PC-9 (cell line): ENCODE measurements at regions of chr6 and their contacts with region 1.

Region 1: DNA sequence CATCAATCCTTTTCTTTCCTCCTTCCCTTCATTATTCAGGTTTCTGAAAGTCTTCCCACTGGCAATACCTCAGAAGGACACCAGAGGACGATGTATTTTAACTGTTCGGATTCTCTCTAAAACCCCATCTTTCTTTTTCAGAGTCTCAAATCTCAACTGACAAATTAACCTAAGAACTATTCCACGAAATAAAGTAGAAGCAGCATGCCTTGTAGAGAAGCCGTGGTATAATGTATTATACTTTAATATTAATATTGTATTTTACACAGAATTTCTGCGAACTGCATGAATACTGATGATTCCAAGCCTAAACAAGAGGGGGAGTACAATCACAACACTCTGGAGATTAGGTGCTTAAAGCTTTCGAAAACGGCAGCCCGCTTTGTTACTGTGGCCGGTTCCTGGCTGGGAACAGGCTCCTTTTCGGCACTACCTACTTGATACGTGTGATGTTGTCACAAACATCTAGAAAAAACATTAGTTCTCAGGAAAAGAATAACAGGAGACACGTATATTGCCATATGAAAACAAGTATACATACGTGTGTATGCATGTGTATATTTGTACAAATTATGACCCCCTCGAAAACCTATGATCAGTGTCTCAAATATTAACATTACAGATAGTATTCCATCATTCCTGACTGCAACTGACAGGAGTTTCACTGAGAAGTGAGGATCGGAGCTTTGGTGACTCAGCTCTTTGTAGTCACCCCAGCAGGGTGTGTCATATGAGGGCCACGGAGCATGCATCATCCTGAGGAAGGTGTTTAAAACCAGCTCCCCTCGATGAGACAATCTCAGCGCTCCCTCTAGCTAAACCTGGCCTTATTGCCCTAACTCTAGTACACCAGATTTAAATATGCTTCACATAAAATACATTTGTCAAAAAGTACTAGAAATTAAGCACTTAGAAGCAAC is 319.7 kb upstream of the TCF21 start:
- DNase-seq: peak; percentile 68 to 88
- H3K4me3 ChIP-seq: peak overlapping the region; percentile 57
- H3K27ac ChIP-seq: peak overlapping the region; percentile 92
- H3K4me1 ChIP-seq: peaks cover 12% of the 10 kb centered on the region
- H3K27me3 ChIP-seq: no peaks in the 10 kb centered on the region
- CTCF ChIP-seq: peak; percentile 99

Region 2: DNA sequence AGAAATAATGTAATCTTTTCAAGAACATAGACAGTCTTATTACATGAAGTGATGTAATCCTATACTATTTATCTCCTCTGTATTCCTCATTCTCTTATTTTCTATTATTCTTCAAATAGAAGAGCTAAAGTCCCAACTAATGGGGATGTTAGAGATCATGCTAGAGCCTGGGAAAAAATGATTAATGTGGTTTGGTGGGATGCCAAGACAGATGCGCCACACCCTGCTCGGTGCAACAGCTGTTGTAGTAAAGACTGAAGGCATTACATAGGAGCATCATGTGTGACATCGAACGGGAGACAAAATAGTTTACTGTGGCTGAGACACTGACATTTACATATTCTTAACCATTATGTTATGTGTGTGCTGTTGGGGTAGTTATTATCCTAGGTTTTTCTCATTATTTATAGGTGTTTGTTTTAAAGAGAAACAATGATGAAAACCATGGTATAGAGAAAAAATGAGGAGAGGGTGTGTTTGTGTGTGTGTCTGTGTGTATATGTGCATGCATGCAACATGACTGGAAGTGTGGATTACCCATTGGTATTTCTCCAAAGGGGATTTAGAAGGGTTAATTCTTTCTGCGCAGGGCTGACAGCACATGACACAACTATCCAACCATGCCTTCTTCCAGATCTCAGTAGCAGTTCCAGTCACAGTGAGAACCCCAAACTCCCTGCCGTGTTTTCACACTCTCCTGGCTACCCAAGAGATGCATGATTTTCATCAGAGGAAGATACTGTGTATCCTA is 172.8 kb before region 1 on chr6:
- CTCF ChIA-PET with region 1: no interaction called
- POLR2A ChIA-PET with region 1: no interaction called
- intact Hi-C with region 1: no loop called
- DNase-seq: no peak
- H3K4me3 ChIP-seq: no peak overlapping the region
- H3K27ac ChIP-seq: no peak overlapping the region
- H3K4me1 ChIP-seq: no peaks in the 10 kb centered on the region
- H3K27me3 ChIP-seq: no peaks in the 10 kb centered on the region
- CTCF ChIP-seq: no peak

Region 3: GRCh38 chr6:133447924-133448323 is 121.3 kb before region 1 on chr6:
- CTCF ChIA-PET with region 1: no interaction called
- POLR2A ChIA-PET with region 1: no interaction called
- intact Hi-C with region 1: no loop called
- DNase-seq: no peak
- H3K4me3 ChIP-seq: no peak overlapping the region
- H3K27ac ChIP-seq: no peak overlapping the region
- H3K4me1 ChIP-seq: no peaks in the 10 kb centered on the region
- H3K27me3 ChIP-seq: no peaks in the 10 kb centered on the region
- CTCF ChIP-seq: no peak

Region 4: GRCh38 chr6:133741375-133741861 is 172.2 kb after region 1 on chr6:
- CTCF ChIA-PET with region 1: no interaction called
- POLR2A ChIA-PET with region 1: interaction called, 20 read pairs
- intact Hi-C with region 1: loop called (anchors 1 kb)
- DNase-seq: peak; percentile 29 to 89
- H3K4me3 ChIP-seq: no peak overlapping the region; the same call in 1 of the 2 replicates
- H3K27ac ChIP-seq: peak overlapping the region; percentile 63
- H3K4me1 ChIP-seq: peaks cover 41% of the 10 kb centered on the region
- H3K27me3 ChIP-seq: no peaks in the 10 kb centered on the region
- CTCF ChIP-seq: no peak; the same call in 1 of the 2 replicates

Region 5: DNA sequence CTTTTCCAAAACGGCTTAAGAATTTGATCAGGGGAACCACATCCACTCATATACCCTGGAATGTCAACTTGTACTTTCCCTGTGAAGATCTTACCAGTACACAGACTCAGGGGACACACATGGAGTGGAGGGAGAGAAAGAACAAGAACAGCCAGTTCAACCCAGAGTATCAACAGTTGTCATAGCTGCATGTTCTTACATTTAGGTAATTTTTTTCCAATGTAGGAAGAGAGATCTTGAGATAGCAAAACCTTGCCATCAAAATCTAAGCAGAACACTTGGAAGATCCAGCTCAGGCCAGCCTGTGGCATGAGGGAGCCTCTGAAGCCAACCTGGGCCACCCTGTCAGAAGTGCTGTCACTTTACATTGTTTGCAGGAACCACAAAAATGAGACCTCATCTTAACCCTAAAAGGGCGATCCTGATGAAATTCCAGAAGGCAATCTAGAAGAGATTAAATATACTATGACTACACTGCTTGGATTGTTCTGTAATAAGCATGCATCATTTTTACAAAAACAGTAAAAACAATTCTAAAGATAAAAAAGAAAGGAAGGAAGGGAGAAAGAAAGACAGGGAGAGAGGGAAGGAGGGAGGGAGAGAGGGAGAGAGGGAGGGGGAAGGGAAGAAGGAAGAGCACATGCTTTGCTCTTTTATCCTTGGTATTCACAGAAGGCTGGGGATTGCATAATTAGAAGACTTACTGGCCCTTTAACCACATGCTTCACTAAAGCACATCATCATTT is 195.0 kb after region 1 on chr6:
- CTCF ChIA-PET with region 1: no interaction called
- POLR2A ChIA-PET with region 1: no interaction called
- intact Hi-C with region 1: loop called (anchors 5 kb)
- DNase-seq: peak; percentile 43 to 61
- H3K4me3 ChIP-seq: no peak overlapping the region
- H3K27ac ChIP-seq: no peak overlapping the region
- H3K4me1 ChIP-seq: peaks cover 12% of the 10 kb centered on the region
- H3K27me3 ChIP-seq: no peaks in the 10 kb centered on the region
- CTCF ChIP-seq: no peak

Region 6: DNA sequence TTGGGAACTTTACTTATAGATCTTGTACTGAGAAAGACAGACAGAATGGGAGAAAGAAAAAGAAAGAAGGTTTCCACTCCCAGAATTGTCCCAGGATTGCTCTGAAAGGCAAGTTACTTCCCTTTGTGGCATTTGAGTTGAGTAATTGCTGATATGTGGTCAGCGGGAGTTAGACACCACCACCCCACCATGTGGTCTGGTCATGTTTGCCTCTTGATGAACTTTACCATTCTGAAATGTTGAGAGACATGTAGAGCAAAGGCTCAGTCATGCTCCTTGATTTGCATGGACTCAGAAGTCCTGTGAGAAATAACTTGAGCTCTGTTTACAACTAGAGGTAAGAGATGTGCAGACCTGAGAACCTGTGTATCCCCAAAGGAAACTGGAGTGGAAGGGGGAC is 336.8 kb after region 1 on chr6:
- CTCF ChIA-PET with region 1: interaction called, 12 read pairs
- POLR2A ChIA-PET with region 1: no interaction called
- intact Hi-C with region 1: no loop called
- DNase-seq: no peak
- H3K4me3 ChIP-seq: no peak overlapping the region
- H3K27ac ChIP-seq: no peak overlapping the region
- H3K4me1 ChIP-seq: no peaks in the 10 kb centered on the region
- H3K27me3 ChIP-seq: no peaks in the 10 kb centered on the region
- CTCF ChIP-seq: no peak

Region 7: DNA sequence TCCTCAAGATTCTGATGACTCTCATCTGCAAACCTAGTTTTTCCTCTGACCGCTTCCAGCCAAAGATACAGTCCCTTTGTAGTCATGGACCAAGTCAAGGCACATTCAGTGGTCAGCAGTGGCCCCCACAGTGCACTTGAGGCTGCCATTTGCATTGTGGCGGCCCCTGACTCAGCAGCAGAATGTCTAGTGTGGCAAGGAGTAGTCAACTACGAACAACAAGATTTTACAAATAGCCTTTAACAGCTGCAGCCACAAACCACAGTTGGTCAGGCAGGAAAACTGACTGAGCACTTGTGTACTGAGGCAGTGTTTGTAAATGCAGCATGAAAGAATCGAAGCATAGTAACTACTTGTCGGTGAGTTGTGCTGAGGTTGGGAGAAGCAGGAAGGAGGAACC is 433.6 kb after region 1 on chr6:
- CTCF ChIA-PET with region 1: no interaction called
- POLR2A ChIA-PET with region 1: no interaction called
- intact Hi-C with region 1: no loop called
- DNase-seq: no peak
- H3K4me3 ChIP-seq: no peak overlapping the region
- H3K27ac ChIP-seq: no peak overlapping the region
- H3K4me1 ChIP-seq: peaks cover 47% of the 10 kb centered on the region
- H3K27me3 ChIP-seq: no peaks in the 10 kb centered on the region
- CTCF ChIP-seq: no peak

Region 8: GRCh38 chr6:134097114-134097707 is 528.0 kb after region 1 on chr6:
- CTCF ChIA-PET with region 1: interaction called, 7 read pairs
- POLR2A ChIA-PET with region 1: no interaction called
- intact Hi-C with region 1: loop called (anchors 2 kb)
- DNase-seq: peak; percentile 48 to 59
- H3K4me3 ChIP-seq: no peak overlapping the region
- H3K27ac ChIP-seq: no peak overlapping the region
- H3K4me1 ChIP-seq: peaks cover 11% of the 10 kb centered on the region; the same call in 1 of the 2 replicates
- H3K27me3 ChIP-seq: no peaks in the 10 kb centered on the region
- CTCF ChIP-seq: peak; percentile 97